BJ (cell line): ENCODE measurements at regions of chr1 and their contacts with region 1.

Region 1: DNA sequence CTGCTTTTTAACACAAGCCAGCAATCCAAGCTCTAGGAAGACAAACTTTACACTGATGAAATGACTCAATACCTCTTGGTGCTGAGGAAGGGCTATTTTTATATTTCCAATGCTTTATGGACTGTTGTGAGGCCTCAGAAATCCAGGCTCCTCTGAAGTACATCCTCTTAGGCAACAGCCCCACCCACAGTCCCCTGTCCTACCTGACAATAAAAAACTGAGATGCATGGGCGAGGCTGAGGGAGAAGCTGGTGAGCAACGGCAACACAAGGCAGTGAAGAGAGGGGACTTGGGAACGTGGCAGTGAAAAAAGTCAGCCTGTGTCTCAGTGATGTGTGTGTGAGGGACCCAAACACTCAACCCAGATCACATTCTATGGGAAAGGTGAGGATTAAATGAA is 10.1 kb upstream of the CPT2 start:
- DNase-seq: no peak
- H3K4me3 ChIP-seq: no peak overlapping the region
- H3K27me3 ChIP-seq: no peaks in the 10 kb centered on the region
- CTCF ChIP-seq: no peak

Region 2: DNA sequence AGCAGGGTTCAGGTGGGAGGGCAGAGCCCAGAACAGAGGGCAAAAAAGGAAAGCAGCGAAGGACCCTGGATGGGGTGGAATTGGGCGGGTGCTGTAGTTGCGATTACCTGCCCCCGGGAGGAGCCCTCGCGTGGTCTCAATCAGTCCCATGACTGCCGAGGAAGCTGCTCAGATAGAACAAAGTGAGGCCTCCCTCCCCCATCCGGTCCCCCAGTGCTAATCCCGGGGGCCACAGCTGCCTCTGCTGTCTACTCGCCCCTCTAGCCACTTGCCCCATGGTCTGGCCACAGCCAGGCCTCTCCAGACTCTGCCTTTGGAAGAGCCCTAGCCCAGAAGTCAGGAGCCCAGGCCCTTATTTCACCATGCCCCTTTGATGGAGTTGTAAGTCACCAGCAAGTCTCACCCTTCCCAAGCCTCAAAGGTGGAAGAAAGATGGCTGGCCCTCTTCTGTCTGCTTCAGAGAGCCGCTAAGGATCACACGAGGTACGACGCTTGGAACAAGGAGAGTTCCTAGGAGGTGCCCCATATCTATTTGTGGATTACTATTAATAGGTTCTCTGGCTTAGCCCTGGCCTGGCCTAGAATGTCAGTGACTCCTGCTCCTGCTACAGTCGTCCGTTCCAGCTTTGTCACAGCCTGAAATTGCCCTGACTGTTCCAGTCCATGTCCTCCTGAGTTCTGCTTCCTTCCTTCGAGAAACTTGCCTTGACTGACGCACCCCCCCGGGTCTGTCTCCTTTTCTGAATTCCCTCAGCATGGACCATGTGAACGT is 281.4 kb before region 1 on chr1:
- CTCF ChIA-PET with region 1: interaction called, 11 read pairs
- POLR2A ChIA-PET with region 1: no interaction called
- DNase-seq: no peak
- H3K4me3 ChIP-seq: no peak overlapping the region
- H3K27me3 ChIP-seq: no peaks in the 10 kb centered on the region
- CTCF ChIP-seq: peak; percentile 44; the same call in 1 of the 2 replicates

Region 3: GRCh38 chr1:53165408-53165961 is 21.0 kb before region 1 on chr1:
- CTCF ChIA-PET with region 1: no interaction called
- POLR2A ChIA-PET with region 1: no interaction called
- DNase-seq: no peak
- H3K4me3 ChIP-seq: no peak overlapping the region
- H3K27me3 ChIP-seq: 0 out of 2 replicates have a peak, but pooled peaks cover 1% of the 10 kb centered on the region
- CTCF ChIP-seq: no peak

Region 4: GRCh38 chr1:53207726-53208125 is 21.2 kb after region 1 on chr1:
- CTCF ChIA-PET with region 1: no interaction called
- POLR2A ChIA-PET with region 1: no interaction called
- DNase-seq: no peak
- H3K4me3 ChIP-seq: no peak overlapping the region
- H3K27me3 ChIP-seq: no peaks in the 10 kb centered on the region
- CTCF ChIP-seq: no peak

Region 5: DNA sequence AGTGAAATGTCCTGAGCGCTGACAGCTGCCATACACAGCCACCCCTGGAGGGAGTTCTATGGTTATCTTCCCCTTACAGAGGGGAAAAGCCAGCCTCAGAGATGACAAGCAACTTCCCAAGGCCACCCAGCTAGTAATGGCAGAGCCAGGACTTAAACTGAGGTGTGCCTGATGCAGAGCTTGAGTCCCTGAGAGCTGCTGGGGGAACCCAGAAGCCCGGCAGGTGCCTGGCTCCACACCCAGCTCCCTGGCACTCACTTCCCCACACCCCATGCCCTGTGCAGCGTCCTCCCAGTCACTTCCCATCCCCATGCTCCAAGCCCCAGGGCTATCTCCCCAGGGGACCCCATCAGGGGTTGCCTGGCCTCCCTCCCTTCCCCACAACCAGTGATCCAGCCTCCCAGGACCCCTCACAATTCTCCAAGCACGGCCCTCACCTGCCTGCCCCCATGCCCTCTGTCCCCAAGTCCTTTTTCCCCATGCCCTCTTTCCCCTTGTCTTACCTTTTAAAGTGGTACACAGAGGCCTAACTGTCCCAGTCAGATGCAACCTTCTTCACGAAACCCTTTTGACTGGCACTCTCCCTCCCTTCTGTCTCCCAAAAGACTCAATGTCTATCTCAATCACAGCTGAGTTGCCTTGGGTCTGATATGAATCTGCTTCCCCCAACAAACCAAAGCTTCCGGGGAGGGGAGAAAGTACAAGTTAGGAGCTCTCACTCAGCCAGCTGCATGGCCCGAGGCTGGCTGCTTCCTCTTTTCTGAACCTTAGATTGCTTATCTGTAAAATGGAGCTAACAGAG is 181.2 kb after region 1 on chr1:
- CTCF ChIA-PET with region 1: no interaction called
- POLR2A ChIA-PET with region 1: no interaction called
- DNase-seq: no peak
- H3K4me3 ChIP-seq: no peak overlapping the region
- H3K27me3 ChIP-seq: peaks cover 13% of the 10 kb centered on the region
- CTCF ChIP-seq: no peak